Activated CD4-positive, alpha-beta T cell treated with anti-CD3 and anti-CD28 coated beads for 36 hours (primary cell): ENCODE measurements at regions of chr19 and their contacts with region 1.

Region 1: DNA sequence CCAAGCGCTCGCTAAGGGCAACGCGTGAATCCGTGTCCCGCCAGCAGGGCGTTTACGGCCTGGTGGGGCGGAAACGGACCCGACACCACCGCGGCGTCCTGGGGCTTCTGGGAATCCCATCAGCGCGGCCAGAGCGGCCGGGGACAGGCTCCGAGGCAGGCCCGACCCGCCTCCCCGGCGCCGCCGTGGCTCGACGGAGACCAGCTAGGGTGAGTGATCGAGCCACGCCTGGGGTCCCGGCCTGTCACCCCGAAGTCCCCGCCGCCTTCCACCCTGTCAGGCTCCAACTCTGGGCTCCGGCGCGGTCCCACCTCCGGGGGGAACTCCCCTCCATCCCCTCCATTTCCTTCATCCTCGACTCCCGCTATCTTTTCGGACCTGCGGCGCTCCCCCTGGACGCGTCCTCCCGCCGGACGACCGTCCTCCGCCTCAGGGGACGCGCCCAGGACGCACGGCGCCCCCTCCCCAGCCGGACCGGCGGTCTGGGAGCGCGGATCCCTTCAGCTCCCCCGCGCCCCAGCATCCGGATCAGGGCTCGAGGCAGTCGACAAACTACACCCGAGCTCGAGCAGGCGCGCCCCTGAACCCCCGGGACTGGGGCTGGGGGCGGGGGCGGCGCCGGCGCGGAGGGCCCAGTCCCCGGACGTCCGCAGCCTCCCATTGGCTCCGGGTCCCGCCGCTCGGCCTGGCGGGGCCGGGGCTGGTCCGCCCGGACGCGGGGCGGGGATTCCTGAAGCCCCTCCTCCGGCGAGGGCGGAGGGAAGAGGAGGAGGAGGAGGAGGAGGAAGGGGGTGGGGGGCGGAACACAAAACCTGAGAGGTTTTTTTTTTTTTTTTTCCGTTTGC is 638 bp upstream of the BICRA start:
- DNase-seq: peak; percentile 97
- ATAC-seq: peak; percentile 93
- H3K4me3 Mint-ChIP-seq: peak overlapping the region; percentile 79
- H3K27ac Mint-ChIP-seq: peak overlapping the region; percentile 72
- H3K4me1 Mint-ChIP-seq: peaks cover 27% of the 10 kb centered on the region
- H3K27me3 Mint-ChIP-seq: no peaks in the 10 kb centered on the region

Region 2: GRCh38 chr19:47436712-47437401 is 171.4 kb before region 1 on chr19:
- CTCF ChIA-PET with region 1: interaction called, 3 read pairs
- POLR2A ChIA-PET with region 1: no interaction called
- intact Hi-C with region 1: loop called in 1 of 2 experiments (anchors 2 kb)
- DNase-seq: peak; percentile 92
- ATAC-seq: peak; percentile 91
- H3K4me3 Mint-ChIP-seq: no peak overlapping the region
- H3K27ac Mint-ChIP-seq: no peak overlapping the region
- H3K4me1 Mint-ChIP-seq: peaks cover 17% of the 10 kb centered on the region
- H3K27me3 Mint-ChIP-seq: peaks cover 38% of the 10 kb centered on the region

Region 3: DNA sequence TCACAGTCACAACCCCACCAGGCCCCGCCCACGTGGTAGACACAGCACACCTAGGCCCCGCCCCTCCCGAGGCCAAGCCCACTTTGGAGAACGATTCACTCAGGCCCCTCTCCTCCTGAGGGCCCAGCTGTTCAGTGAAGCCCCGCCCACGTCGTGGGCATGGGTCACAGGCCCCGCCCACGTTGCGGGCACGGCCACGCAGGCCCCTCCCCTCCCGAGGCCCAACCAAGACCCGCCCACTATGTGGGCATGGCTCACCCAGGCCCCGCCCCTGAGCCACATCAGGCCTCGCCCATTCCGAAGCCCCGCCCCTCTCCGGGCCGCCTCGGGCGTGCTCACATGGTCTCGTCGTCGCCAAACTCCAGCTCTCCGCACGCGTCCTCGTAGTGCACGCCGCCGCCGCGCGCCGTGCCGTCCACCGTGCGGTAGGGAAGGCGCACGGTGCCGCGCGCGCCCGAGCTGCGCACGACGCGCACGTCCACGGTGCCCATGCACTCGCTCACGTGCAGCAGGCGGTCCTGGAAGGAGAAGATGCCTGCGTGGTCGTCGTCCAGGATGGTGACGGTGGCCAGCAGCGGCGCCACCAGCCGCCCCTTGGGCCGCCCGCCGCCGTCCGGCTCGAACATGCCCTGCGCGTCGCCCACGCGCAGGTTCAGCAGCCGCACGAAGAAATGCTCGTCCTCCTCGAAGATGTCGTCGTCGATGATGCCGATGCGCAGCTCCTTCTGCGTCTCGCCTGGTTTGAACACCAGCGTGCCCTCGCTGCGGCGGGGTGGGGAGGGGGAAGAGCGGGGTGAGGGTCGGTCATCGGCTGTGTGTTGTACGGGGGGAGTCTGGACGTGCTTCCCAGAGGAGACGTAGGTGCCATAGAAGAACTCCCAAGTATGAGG is 160.6 kb before region 1 on chr19:
- CTCF ChIA-PET with region 1: no interaction called
- POLR2A ChIA-PET with region 1: no interaction called
- intact Hi-C with region 1: loop called in 1 of 2 experiments (anchors 1 kb)
- DNase-seq: peak; percentile 90
- ATAC-seq: peak; percentile 85
- H3K4me3 Mint-ChIP-seq: peak overlapping the region; percentile 1
- H3K27ac Mint-ChIP-seq: no peak overlapping the region
- H3K4me1 Mint-ChIP-seq: peaks cover 44% of the 10 kb centered on the region
- H3K27me3 Mint-ChIP-seq: peaks cover 56% of the 10 kb centered on the region

Region 4: DNA sequence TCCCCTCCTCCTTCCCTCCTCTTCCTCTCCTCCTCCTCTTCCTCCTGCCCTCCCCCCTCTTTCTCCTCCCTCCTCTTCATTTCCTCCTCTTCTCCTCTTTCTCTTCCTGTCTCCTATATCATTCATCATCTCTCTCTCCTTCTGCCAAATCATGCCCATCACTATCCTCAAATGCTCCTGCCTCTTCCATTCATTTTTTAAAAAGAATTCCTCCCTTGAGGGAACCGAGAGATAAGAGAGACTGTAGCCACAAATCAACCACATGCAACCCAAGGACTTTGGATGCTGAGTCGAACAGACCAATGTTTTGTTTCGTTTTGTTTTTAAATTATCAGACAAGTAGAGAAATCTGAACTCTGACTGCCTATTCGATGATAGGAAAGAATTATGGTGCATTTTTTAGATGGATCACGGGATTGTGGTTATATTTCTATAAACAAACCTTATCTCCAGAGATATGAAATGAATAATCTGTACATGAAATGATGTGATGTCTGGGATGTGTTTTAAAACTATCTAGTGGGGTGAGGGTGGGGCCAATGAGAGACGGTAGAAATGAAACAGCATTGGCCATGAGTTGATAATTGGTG is 25.9 kb before region 1 on chr19:
- CTCF ChIA-PET with region 1: no interaction called
- POLR2A ChIA-PET with region 1: interaction called, 10 read pairs
- intact Hi-C with region 1: no loop called
- DNase-seq: no peak
- ATAC-seq: peak; percentile 39
- H3K4me3 Mint-ChIP-seq: no peak overlapping the region
- H3K27ac Mint-ChIP-seq: peak overlapping the region; percentile 73
- H3K4me1 Mint-ChIP-seq: peaks cover 33% of the 10 kb centered on the region
- H3K27me3 Mint-ChIP-seq: no peaks in the 10 kb centered on the region